AG04449 (cell line): ENCODE measurements at regions of chr11 and their contacts with region 1.

Region 1: DNA sequence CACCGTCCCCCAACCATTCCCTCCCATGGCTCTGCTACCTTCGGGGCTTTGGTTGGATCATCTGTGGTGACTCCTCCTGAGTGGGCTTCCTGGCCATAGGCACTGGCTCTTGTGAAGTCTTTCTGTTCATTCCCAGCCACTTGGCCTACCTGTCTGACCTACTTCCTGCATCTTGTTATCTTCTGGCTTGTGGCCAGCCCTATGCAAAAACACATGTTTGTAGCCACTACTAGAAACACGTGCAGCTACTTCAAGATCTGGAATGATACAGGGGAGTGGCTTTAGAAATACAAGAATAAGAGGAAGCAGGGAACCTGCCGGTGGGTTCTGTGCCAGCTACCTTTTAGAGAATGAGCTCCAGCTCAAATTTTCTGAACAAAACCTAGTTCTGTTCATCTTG is 20.9 kb downstream of the RCOR2 start:
- DNase-seq: no peak
- H3K4me3 ChIP-seq: no peak overlapping the region
- CTCF ChIP-seq: no peak

Region 2: DNA sequence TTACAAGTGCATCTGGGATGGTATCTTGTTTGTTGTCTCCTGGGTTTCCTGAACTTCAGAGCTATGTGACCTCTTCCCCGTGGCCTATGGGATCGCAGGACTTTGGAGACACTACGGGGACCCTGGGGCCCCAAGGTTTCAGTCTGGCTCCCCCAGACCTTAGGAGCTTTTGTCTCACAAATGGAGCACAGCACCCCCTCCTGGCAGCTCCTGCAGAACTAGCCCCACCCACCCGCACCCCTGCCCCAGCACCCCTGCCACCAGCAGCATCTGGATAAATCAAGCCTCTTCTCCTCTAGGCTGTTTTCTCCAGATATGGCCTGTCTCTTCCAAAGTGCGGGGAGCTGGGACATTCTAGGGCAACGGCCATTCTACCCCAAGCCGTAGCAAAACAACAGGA is 10.5 kb after region 1 on chr11:
- CTCF ChIA-PET with region 1: interaction called, 16 read pairs
- POLR2A ChIA-PET with region 1: no interaction called
- DNase-seq: no peak
- H3K4me3 ChIP-seq: no peak overlapping the region
- CTCF ChIP-seq: no peak

Region 3: GRCh38 chr11:63939397-63939890 is 43.4 kb after region 1 on chr11:
- CTCF ChIA-PET with region 1: no interaction called
- POLR2A ChIA-PET with region 1: no interaction called
- DNase-seq: no peak
- H3K4me3 ChIP-seq: peak overlapping the region; percentile 94
- CTCF ChIP-seq: no peak